CD4-positive, alpha-beta memory T cell (primary cell): ENCODE measurements at regions of chr20 and their contacts with region 1.

Region 1: GRCh38 chr20:57596998-57597939 is 23.0 kb downstream of the ZBP1 start:
- DNase-seq: peak; percentile 61 to 75 (median 70)
- H3K4me3 ChIP-seq: no peak overlapping the region
- H3K4me3 Mint-ChIP-seq: peak overlapping the region in 2 of 8 donors; percentile 16 to 36
- H3K27ac ChIP-seq: no peak overlapping the region
- H3K27ac Mint-ChIP-seq: peak overlapping the region in 1 of 7 donors; percentile 29
- H3K4me1 ChIP-seq: peaks cover 3% of the 10 kb centered on the region
- H3K4me1 Mint-ChIP-seq: peaks cover 0 to 8% (median 5%) of the 10 kb centered on the region in 4 donors
- H3K27me3 ChIP-seq: no peaks in the 10 kb centered on the region
- H3K27me3 Mint-ChIP-seq: peaks cover 3 to 4% of the 10 kb centered on the region in 2 donors

Region 2: GRCh38 chr20:57514273-57514751 is 83.0 kb before region 1 on chr20:
- CTCF ChIA-PET with region 1: interaction called, 3 read pairs
- POLR2A ChIA-PET with region 1: no interaction called
- intact Hi-C with region 1: loop called (anchors 2 kb)
- DNase-seq: peak in 2 of 5 donors; percentile 6 to 17
- H3K4me3 ChIP-seq: no peak overlapping the region
- H3K4me3 Mint-ChIP-seq: no peak overlapping the region
- H3K27ac ChIP-seq: no peak overlapping the region
- H3K27ac Mint-ChIP-seq: no peak overlapping the region
- H3K4me1 ChIP-seq: no peaks in the 10 kb centered on the region
- H3K4me1 Mint-ChIP-seq: no peaks in the 10 kb centered on the region
- H3K27me3 ChIP-seq: no peaks in the 10 kb centered on the region
- H3K27me3 Mint-ChIP-seq: peaks cover 2 to 10% of the 10 kb centered on the region in 2 donors

Region 3: GRCh38 chr20:57654363-57654997 is 57.2 kb after region 1 on chr20:
- CTCF ChIA-PET with region 1: interaction called, 18 read pairs
- POLR2A ChIA-PET with region 1: no interaction called
- intact Hi-C with region 1: loop called (anchors 1 kb)
- DNase-seq: peak in 4 of 5 donors; percentile 45 to 55 (median 50)
- H3K4me3 ChIP-seq: no peak overlapping the region
- H3K4me3 Mint-ChIP-seq: peak overlapping the region in 2 of 8 donors; percentile 6 to 39
- H3K27ac ChIP-seq: no peak overlapping the region
- H3K27ac Mint-ChIP-seq: peak overlapping the region in 2 of 7 donors; percentile 76 to 80
- H3K4me1 ChIP-seq: peaks cover 17% of the 10 kb centered on the region
- H3K4me1 Mint-ChIP-seq: peaks cover 13 to 29% (median 21%) of the 10 kb centered on the region in 4 donors
- H3K27me3 ChIP-seq: no peaks in the 10 kb centered on the region
- H3K27me3 Mint-ChIP-seq: peaks cover 0 to 3% of the 10 kb centered on the region in 2 donors

Region 4: GRCh38 chr20:57682184-57683101 is 85.2 kb after region 1 on chr20:
- CTCF ChIA-PET with region 1: interaction called, 10 read pairs
- POLR2A ChIA-PET with region 1: no interaction called
- intact Hi-C with region 1: loop called (anchors 1 kb)
- DNase-seq: no peak
- H3K4me3 ChIP-seq: no peak overlapping the region
- H3K4me3 Mint-ChIP-seq: no peak overlapping the region
- H3K27ac ChIP-seq: no peak overlapping the region
- H3K27ac Mint-ChIP-seq: peak overlapping the region in 1 of 7 donors; percentile 8
- H3K4me1 ChIP-seq: no peaks in the 10 kb centered on the region
- H3K4me1 Mint-ChIP-seq: peaks cover 7 to 18% (median 15%) of the 10 kb centered on the region in 4 donors
- H3K27me3 ChIP-seq: no peaks in the 10 kb centered on the region
- H3K27me3 Mint-ChIP-seq: peaks cover 4 to 5% of the 10 kb centered on the region in 2 donors

Region 5: GRCh38 chr20:58179432-58180099 is 582.3 kb after region 1 on chr20:
- CTCF ChIA-PET with region 1: interaction called, 38 read pairs
- POLR2A ChIA-PET with region 1: interaction called, 4 read pairs
- intact Hi-C with region 1: no loop called
- DNase-seq: peak in 4 of 5 donors; percentile 57 to 66 (median 59)
- H3K4me3 ChIP-seq: no peak overlapping the region
- H3K4me3 Mint-ChIP-seq: peak overlapping the region; percentile 29 to 83 (median 72)
- H3K27ac ChIP-seq: no peak overlapping the region
- H3K27ac Mint-ChIP-seq: peak overlapping the region in 2 of 7 donors; percentile 22 to 36
- H3K4me1 ChIP-seq: peaks cover 10% of the 10 kb centered on the region
- H3K4me1 Mint-ChIP-seq: peaks cover 0 to 9% (median 4%) of the 10 kb centered on the region in 4 donors
- H3K27me3 ChIP-seq: peaks cover 8% of the 10 kb centered on the region
- H3K27me3 Mint-ChIP-seq: peaks cover 10 to 15% of the 10 kb centered on the region in 2 donors